Calu3 (cell line): ENCODE measurements at regions of chrX and their contacts with region 1.

Region 1: DNA sequence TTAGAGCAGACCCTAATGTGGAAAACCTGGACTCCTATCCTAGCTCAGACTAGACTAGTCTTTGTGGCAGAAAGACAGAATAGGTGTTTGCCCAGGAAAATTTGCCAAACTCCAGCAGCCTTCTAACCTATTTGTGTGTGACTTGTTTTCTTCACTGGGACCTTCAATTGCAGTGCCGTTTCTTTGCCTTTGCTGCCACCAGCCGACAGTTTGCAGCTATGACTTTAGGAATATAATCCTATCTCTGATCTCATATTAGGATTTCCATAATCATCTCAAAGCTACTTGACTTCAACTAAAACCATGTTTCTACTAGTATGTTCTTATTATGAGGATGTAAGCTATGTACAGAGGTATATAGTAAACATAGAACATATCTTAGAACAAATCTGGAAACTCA is 60.2 kb upstream of the PGAM4 start:
- DNase-seq: peak; percentile 47
- H3K4me3 Mint-ChIP-seq: no peak overlapping the region
- H3K27ac Mint-ChIP-seq: no peak overlapping the region
- H3K4me1 Mint-ChIP-seq: peaks cover 3% of the 10 kb centered on the region
- H3K27me3 Mint-ChIP-seq: no peaks in the 10 kb centered on the region
- CTCF ChIP-seq: peak; percentile 53

Region 2: DNA sequence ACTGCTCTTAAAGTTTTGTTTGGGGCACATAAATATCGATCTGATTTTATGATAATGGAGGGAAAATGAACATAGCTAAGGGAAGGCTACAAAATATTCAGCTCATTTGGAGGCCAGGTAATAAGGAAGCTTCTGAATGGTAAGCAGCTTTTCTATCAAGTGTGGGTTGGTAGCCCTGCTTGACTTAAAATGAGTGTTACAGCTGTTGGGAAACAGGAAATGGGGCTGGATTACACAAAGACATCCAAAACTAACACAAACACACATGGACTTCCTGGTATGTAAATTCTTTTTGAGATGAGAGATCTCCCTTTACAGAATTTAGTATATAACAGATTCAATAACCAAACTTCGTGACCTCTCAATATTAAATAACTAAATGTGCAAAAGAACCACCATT is 524.4 kb before region 1 on chrX:
- CTCF ChIA-PET with region 1: no interaction called
- intact Hi-C with region 1: loop called (anchors 10 kb)
- DNase-seq: peak; percentile 1
- H3K4me3 Mint-ChIP-seq: no peak overlapping the region
- H3K27ac Mint-ChIP-seq: no peak overlapping the region
- H3K4me1 Mint-ChIP-seq: peaks cover 8% of the 10 kb centered on the region
- H3K27me3 Mint-ChIP-seq: no peaks in the 10 kb centered on the region
- CTCF ChIP-seq: no peak

Region 3: GRCh38 chrX:78092296-78092695 is 62.6 kb after region 1 on chrX:
- CTCF ChIA-PET with region 1: interaction called, 3 read pairs
- intact Hi-C with region 1: loop called (anchors 5 kb)
- DNase-seq: peak; percentile 59
- H3K4me3 Mint-ChIP-seq: no peak overlapping the region
- H3K27ac Mint-ChIP-seq: no peak overlapping the region
- H3K4me1 Mint-ChIP-seq: peaks cover 7% of the 10 kb centered on the region
- H3K27me3 Mint-ChIP-seq: no peaks in the 10 kb centered on the region
- CTCF ChIP-seq: peak; percentile 61